ENCODE measurements at regions of chr20 and their contacts with region 1.

Region 1: GRCh38 chr20:34988191-34988540 is 32.5 kb downstream of the MYH7B start:
- DNase-seq: no peak
- ATAC-seq: no peak
- H3K4me3 ChIP-seq: no peak overlapping the region
- H3K27ac ChIP-seq: no peak overlapping the region
- H3K4me1 ChIP-seq: peaks cover 5% of the 10 kb centered on the region
- H3K27me3 ChIP-seq: no peaks in the 10 kb centered on the region
- CTCF ChIP-seq: no peak

Region 2: GRCh38 chr20:34753706-34754461 is 234.3 kb before region 1 on chr20:
- CTCF ChIA-PET with region 1: no interaction called
- POLR2A ChIA-PET with region 1: no interaction called
- intact Hi-C with region 1: no loop called
- DNase-seq: no peak
- ATAC-seq: no peak
- H3K4me3 ChIP-seq: no peak overlapping the region
- H3K27ac ChIP-seq: no peak overlapping the region
- H3K4me1 ChIP-seq: no peaks in the 10 kb centered on the region
- H3K27me3 ChIP-seq: no peaks in the 10 kb centered on the region
- CTCF ChIP-seq: 0 out of 2 replicates have a peak, but pooled peaks have one; percentile 21

Region 3: GRCh38 chr20:34791289-34792020 is 196.7 kb before region 1 on chr20:
- CTCF ChIA-PET with region 1: no interaction called
- POLR2A ChIA-PET with region 1: interaction called, 12 read pairs
- intact Hi-C with region 1: no loop called
- DNase-seq: peak; percentile 50
- ATAC-seq: peak; percentile 96
- H3K4me3 ChIP-seq: no peak overlapping the region
- H3K27ac ChIP-seq: no peak overlapping the region
- H3K4me1 ChIP-seq: peaks cover 15% of the 10 kb centered on the region
- H3K27me3 ChIP-seq: no peaks in the 10 kb centered on the region
- CTCF ChIP-seq: no peak

Region 4: DNA sequence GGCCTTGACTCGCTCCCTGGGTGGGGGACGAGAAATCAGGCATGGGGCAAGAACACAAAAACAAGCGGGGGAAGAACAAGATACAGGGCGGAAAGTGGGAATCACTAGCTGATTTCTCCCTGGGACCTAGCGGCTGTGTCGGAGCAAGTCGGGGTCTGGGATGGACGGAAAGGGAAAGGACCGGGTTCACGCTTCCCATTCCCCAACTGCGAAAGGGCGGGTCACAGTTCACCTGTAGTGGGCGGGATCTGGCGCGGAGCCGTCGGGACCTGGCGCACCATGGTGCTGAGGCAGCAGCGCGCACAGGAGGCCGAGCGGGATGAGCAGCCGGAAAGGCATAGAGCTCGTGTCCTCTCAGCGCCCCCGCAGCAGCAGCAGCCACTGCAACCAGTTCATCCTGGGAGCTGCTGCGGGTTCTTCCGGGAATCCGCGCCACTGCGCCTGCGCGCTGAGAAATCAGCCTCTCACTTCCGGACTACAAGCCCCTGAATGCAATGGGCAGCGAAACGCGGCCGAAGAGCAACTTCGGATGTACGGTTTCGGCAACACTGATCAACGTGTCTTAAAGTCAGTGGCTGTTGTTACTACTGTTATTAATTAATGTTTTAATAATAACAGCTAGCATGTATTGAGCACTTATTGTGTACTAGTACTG is 158.9 kb after region 1 on chr20 and contains the start of gene EDEM2:
- CTCF ChIA-PET with region 1: no interaction called
- POLR2A ChIA-PET with region 1: no interaction called
- intact Hi-C with region 1: no loop called
- DNase-seq: peak; percentile 96
- ATAC-seq: peak; percentile 90
- H3K4me3 ChIP-seq: peak within 1 kb of the TSS; percentile 95
- H3K27ac ChIP-seq: peak within 1 kb of the TSS; percentile 51
- H3K4me1 ChIP-seq: peaks cover 10% of the 10 kb centered on the region
- H3K27me3 ChIP-seq: no peaks in the 10 kb centered on the region
- CTCF ChIP-seq: no peak
- total RNA-seq, gene EDEM2: 22.2 and 28.5 TPM in 2 replicates